Ascending aorta (tissue), 2 donors: ENCODE measurements at regions of chr17 and their contacts with region 1.

Region 1: DNA sequence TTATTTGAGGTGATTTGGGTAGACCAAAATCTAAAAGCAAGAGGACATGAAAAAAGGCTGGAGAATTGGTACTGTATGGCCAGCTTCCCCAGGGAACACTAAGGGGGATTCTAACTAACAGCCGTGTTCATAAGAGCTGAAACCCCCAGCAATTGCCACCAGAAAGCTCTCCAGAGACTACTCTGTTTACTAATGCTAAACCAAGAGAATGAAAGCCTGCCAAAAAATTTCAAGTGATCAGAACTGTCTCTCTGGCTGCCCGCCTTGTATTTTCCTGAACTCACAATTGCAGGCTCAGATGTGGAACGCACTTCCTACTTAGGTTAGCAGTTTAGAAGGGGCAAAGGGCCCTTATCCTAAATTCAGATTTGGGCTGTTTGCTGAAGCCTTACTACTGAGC is 24.1 kb downstream of the MYH10 start:
- DNase-seq: no peak
- H3K4me3 ChIP-seq: peak overlapping the region; percentile 25 to 50
- H3K27ac ChIP-seq: peak overlapping the region; percentile 75 to 93
- H3K4me1 ChIP-seq: peaks cover 18 to 55% of the 10 kb centered on the region in 2 donors
- H3K27me3 ChIP-seq: no peaks in the 10 kb centered on the region
- CTCF ChIP-seq: no peak

Region 2: GRCh38 chr17:8079291-8080207 is 526.9 kb before region 1 on chr17:
- intact Hi-C with region 1: no loop called
- DNase-seq: peak in 1 of 2 donors; percentile 75
- H3K4me3 ChIP-seq: peak overlapping the region; percentile 43 to 60
- H3K27ac ChIP-seq: no peak overlapping the region
- H3K4me1 ChIP-seq: peaks cover 0 to 11% of the 10 kb centered on the region in 2 donors
- H3K27me3 ChIP-seq: no peaks in the 10 kb centered on the region
- CTCF ChIP-seq: peak; percentile 70 to 94 (median 93)

Region 3: DNA sequence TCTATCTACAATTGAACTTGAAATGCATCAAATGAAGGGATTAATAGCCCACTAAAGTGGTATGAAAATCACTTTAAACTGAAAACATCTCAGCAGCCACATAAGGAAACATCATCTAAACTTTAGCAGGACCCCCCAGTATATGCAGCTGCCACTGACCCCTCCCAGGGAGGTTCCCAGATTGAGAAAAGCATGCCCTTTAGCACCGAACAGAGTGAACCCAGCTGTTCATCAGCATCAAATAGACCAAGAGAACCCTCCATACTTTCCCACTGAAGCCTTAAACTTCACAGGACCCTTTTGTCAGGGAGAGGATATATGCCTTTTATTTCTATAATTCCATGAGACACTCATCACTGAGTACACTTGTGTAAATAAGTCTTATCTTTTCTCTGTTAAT is 20.5 kb before region 1 on chr17:
- intact Hi-C with region 1: loop called (anchors 2 kb)
- DNase-seq: no peak
- H3K4me3 ChIP-seq: no peak overlapping the region
- H3K27ac ChIP-seq: peak overlapping the region; percentile 57 to 83
- H3K4me1 ChIP-seq: peaks cover 7 to 73% of the 10 kb centered on the region in 2 donors
- H3K27me3 ChIP-seq: no peaks in the 10 kb centered on the region
- CTCF ChIP-seq: no peak